ENCODE measurements at regions of chr1 and their contacts with region 1.

Region 1: GRCh38 chr1:234893725-234894630 is 234.7 kb downstream of the TOMM20 start:
- DNase-seq: no peak
- H3K4me3 Mint-ChIP-seq: no peak overlapping the region
- H3K27ac Mint-ChIP-seq: peak overlapping the region; percentile 72
- H3K4me1 Mint-ChIP-seq: peaks cover 50% of the 10 kb centered on the region
- H3K27me3 Mint-ChIP-seq: no peaks in the 10 kb centered on the region

Region 2: DNA sequence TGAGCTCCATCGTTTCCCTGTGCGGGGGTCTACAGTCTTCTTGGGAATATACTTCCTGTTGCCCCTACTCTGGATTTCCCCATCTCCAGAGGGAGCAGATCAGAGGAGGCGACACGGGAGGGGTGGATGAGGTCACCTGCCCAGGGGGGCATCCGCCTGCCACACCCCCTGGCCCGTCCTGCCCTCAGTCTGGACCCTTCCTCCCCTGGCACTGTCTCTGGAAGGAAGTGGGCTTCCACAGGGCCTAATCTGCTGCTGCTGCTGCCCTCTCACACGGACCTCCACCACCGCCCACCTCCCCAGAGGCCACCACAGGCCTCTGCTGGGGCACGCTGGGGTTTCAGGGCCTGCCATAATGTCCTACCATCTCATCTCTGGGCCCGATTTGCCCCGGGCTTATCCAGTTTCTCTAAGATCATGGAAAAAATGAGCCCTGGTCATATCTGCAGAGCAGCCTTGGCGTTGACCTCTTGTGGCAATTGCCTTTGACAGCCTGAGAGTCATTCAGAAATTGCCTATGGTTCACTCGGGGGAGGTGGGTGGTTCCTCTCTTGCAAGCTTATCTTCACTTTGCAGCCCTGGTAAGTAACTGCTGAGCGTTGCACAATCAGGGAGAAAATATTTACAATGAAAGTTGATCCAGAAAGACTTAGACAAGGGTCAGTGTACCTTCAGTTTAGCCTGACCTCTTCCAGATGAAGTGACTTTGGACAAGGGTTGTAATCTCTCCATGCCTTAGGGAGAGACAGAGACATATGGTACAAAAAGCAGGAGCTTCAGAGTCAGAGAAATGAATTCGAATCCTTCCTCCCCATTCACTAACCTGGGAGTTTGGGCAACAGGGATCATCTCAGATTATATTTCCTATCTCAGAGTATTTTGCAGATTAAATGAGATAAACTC is 17.8 kb before region 1 on chr1:
- intact Hi-C with region 1: loop called (anchors 1 kb)
- DNase-seq: no peak
- H3K4me3 Mint-ChIP-seq: no peak overlapping the region
- H3K27ac Mint-ChIP-seq: peak overlapping the region; percentile 88
- H3K4me1 Mint-ChIP-seq: peaks cover 63% of the 10 kb centered on the region
- H3K27me3 Mint-ChIP-seq: no peaks in the 10 kb centered on the region

Measured in activated T-helper 2 cell treated with anti-CD3 and anti-CD28 coated beads, Interferon-gamma antibody, Interleukin-2, Interleukin-4, amounts not matched to agents 10 μg/mL and 5 μg/mL and 100 μg/mL, durations not matched to agents 14 hours and 24 hours and 36 hours (primary cell).